Dorsolateral prefrontal cortex (tissue), 120 donors: ENCODE measurements at regions of chr5 and their contacts with region 1.

Region 1: DNA sequence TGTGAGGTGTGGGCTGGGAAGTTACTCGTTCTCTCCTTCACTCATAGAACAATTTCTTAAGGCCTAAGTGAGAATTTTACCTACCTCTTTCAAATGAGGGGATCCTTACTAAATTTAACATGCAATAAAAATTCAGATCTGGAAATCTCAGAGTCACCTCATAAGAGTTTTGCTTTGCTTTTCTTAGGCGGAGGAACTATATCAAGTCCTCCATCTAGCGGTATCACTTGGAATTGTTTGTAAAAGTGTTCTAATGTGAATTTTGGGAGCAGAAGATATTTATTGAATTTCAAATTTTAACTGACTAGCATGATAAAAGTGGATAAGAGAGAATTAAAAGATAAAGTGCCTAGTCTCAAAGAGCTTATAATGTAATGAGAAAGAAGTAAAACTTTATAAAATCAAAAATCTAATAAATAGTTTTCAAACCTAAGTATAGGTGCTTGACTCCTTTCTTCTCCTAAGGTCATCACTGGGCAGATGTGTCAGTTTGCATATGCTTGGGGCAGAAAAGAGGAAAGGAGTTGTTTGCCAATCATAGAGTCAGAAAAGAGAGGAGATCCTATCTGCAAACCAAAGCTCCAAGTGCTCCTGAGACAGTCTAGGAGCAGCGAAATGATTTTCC is 145.7 kb upstream of the DAB2 start:
- DNase-seq: no peak
- H3K4me3 ChIP-seq: no peak overlapping the region
- H3K27ac ChIP-seq: no peak overlapping the region
- H3K27me3 ChIP-seq: peaks cover 0 to 18% (median 0%) of the 10 kb centered on the region in 45 donors
- CTCF ChIP-seq: peak; percentile 53 to 88 (median 72)

Region 2: GRCh38 chr5:39158127-39158593 is 412.4 kb before region 1 on chr5:
- intact Hi-C with region 1: loop called in 1 of 2 experiments (anchors 10 kb)
- DNase-seq: no peak
- H3K4me3 ChIP-seq: no peak overlapping the region
- H3K27ac ChIP-seq: no peak overlapping the region
- H3K27me3 ChIP-seq: peaks cover 0 to 10% (median 0%) of the 10 kb centered on the region in 45 donors
- CTCF ChIP-seq: no peak

Region 3: DNA sequence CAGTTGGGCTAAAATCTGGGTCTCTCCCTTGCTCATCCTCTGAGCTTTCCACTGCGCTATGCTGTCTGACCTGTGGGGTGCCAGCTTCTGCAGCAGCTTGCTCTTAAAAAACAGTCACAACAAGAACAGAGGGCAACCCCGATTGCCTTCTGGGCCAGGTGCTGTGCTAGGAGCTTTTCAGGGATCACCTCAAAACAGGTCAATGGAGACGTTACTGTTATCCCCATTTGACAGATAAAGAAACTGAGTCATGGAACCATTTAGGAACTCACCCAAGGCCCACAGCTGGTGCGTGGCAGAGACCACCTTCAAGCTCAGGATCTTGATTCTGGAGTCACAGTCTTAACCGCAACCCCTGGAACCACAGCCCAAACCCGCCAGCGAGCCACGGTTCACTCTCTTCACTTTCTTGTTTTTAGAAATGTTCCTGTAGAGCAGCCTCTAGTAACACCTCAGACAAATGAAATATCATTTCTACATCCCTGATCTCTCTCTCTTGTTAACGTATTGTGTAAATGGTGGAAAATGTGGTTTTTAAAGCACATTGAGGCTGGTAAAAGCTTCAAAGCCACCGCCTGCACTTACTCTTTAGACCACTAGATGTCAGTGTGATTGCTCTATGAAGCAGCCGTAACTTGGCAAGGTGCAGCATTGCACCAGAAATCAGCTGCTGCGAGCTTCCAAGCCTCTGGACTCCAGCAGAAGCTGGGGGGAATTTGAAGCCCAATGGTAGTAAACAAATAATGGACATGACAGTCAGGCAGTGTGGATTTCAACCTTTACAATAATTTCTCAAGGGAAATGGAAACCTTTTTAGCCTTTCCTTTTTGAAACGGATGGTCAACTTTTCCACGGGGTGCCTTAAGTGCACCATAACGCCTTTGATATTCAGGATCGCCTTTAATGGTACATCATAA is 352.9 kb before region 1 on chr5:
- intact Hi-C with region 1: loop called in 1 of 2 experiments (anchors 5 kb)
- DNase-seq: peak in 9 of 10 donors; percentile 38 to 81 (median 58)
- H3K4me3 ChIP-seq: peak overlapping the region in 42 of 59 donors; percentile 0 to 52 (median 28)
- H3K27ac ChIP-seq: peak overlapping the region in 24 of 59 donors; percentile 1 to 80 (median 44)
- H3K27me3 ChIP-seq: no peaks in the 10 kb centered on the region
- CTCF ChIP-seq: peak; percentile 81 to 97 (median 93)

Region 4: GRCh38 chr5:40736103-40736875 is 1165.8 kb after region 1 on chr5:
- intact Hi-C with region 1: loop called in 1 of 2 experiments (anchors 10 kb)
- DNase-seq: no peak
- H3K4me3 ChIP-seq: no peak overlapping the region
- H3K27ac ChIP-seq: peak overlapping the region in 8 of 59 donors; percentile 2 to 49 (median 13)
- H3K27me3 ChIP-seq: no peaks in the 10 kb centered on the region
- CTCF ChIP-seq: peak; percentile 52 to 96 (median 78)